Calu3 (cell line): ENCODE measurements at regions of chr4 and their contacts with region 1.

Region 1: GRCh38 chr4:154254999-154255398 is 236.6 kb downstream of the DCHS2 start:
- DNase-seq: no peak
- H3K4me3 Mint-ChIP-seq: no peak overlapping the region
- H3K27ac Mint-ChIP-seq: no peak overlapping the region
- H3K4me1 Mint-ChIP-seq: no peaks in the 10 kb centered on the region
- H3K27me3 Mint-ChIP-seq: no peaks in the 10 kb centered on the region
- CTCF ChIP-seq: no peak

Region 2: GRCh38 chr4:153916273-153916755 is 338.7 kb before region 1 on chr4:
- CTCF ChIA-PET with region 1: no interaction called
- intact Hi-C with region 1: no loop called
- DNase-seq: no peak
- H3K4me3 Mint-ChIP-seq: no peak overlapping the region
- H3K27ac Mint-ChIP-seq: no peak overlapping the region
- H3K4me1 Mint-ChIP-seq: no peaks in the 10 kb centered on the region
- H3K27me3 Mint-ChIP-seq: peaks cover 11% of the 10 kb centered on the region
- CTCF ChIP-seq: no peak

Region 3: GRCh38 chr4:154314248-154314647 is 59.2 kb after region 1 on chr4:
- CTCF ChIA-PET with region 1: no interaction called
- intact Hi-C with region 1: loop called (anchors 1 kb)
- DNase-seq: peak; percentile 21
- H3K4me3 Mint-ChIP-seq: no peak overlapping the region
- H3K27ac Mint-ChIP-seq: no peak overlapping the region
- H3K4me1 Mint-ChIP-seq: peaks cover 9% of the 10 kb centered on the region
- H3K27me3 Mint-ChIP-seq: no peaks in the 10 kb centered on the region
- CTCF ChIP-seq: no peak